OCI-LY7 (cell line): ENCODE measurements at regions of chr14 and their contacts with region 1.

Region 1: DNA sequence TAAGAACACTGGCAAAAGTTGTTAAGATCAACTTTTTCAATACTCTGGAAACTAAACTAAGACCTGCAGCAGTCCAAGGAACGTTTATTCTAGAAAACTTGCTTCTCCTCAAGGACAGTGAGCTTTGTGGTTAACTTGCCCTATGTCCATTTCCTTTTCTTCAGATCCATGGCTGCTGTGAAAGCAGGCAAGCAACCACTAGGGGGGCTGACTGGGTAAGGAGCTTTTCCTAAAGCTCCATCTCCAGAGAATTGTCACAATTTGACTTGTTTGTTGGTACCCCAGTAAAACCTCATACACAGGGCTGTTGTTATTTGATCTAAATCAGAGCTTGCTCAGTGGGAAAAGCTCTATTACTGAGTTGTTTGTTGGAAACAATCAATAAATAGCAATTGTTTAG is 10.1 kb upstream of the RPL10L start:
- DNase-seq: no peak
- H3K4me3 ChIP-seq: no peak overlapping the region
- H3K27ac ChIP-seq: no peak overlapping the region
- H3K4me1 ChIP-seq: no peaks in the 10 kb centered on the region
- CTCF ChIP-seq: 0 out of 2 replicates have a peak, but pooled peaks have one; percentile 24

Region 2: DNA sequence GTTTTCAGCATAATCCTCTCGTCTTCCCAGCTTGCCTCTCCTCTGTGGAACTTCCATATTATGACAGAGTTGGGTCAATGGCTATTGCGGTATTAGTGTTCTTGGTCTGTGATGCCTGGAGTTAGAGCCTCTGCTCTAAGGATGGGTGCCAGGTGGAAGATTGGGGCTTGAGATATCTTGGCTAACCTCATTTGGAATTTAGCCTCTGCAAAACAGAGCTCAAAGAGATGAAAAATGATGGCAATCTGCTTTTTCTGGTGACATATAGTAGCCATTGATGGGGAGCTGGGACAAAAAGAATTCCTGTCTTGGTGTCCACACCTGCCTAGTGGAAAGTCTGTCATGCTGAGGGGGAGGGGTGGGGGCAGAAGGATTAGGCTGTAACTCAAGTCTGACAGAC is 162.2 kb before region 1 on chr14:
- CTCF ChIA-PET with region 1: interaction called, 11 read pairs
- POLR2A ChIA-PET with region 1: no interaction called
- intact Hi-C with region 1: no loop called
- DNase-seq: no peak
- H3K4me3 ChIP-seq: no peak overlapping the region
- H3K27ac ChIP-seq: no peak overlapping the region
- H3K4me1 ChIP-seq: no peaks in the 10 kb centered on the region
- CTCF ChIP-seq: no peak

Region 3: GRCh38 chr14:47300796-47301195 is 639.1 kb after region 1 on chr14:
- CTCF ChIA-PET with region 1: no interaction called
- POLR2A ChIA-PET with region 1: no interaction called
- intact Hi-C with region 1: no loop called
- DNase-seq: no peak
- H3K4me3 ChIP-seq: no peak overlapping the region
- H3K27ac ChIP-seq: no peak overlapping the region
- H3K4me1 ChIP-seq: no peaks in the 10 kb centered on the region
- CTCF ChIP-seq: no peak